A673 (cell line): ENCODE measurements at regions of chr5 and their contacts with region 1.

Region 1: GRCh38 chr5:132490486-132491367 is at the start of gene IRF1:
- DNase-seq: peak; percentile 95
- H3K4me3 ChIP-seq: peak within 1 kb of the TSS; percentile 64
- H3K27ac ChIP-seq: peak within 1 kb of the TSS; percentile 86
- H3K4me1 ChIP-seq: peaks cover 13% of the 10 kb centered on the region
- H3K27me3 ChIP-seq: no peaks in the 10 kb centered on the region
- CTCF ChIP-seq: no peak; the same call in 1 of the 2 replicates
- total RNA-seq, gene IRF1: 5.7 and 6.9 TPM in 2 replicates

Region 2: DNA sequence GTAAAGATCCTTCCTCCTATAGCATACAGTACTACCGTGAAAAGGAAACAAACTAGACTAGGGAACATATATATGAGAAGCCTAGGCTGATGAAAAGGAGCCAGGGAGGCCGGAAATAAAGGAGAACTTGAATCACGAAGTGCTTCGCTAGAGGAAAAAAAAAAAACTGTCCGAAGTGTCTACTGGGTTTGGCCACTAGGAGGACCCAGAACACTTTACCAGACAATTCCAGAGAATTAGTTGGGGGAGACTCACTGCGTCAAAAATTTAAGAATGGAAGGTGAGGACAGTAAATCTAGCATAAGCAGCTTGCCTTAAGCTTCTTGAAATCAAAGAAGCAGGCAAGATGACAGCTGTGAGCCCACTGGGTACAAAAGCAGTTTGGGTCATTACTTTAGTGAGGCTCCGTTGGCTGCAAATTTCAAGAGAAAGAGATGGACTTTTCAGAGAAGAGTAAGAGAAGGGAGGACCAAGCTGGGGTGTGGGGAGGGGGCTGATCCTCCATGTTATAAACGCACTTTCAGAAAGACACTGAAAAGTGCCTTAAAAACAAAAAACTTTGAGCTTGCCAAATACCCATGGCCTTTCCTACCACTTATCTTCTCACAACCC is 310.5 kb before region 1 on chr5:
- CTCF ChIA-PET with region 1: no interaction called
- POLR2A ChIA-PET with region 1: no interaction called
- intact Hi-C with region 1: loop called (anchors 10 kb)
- DNase-seq: peak; percentile 68
- H3K4me3 ChIP-seq: no peak overlapping the region
- H3K27ac ChIP-seq: no peak overlapping the region
- H3K4me1 ChIP-seq: peaks cover 6% of the 10 kb centered on the region
- H3K27me3 ChIP-seq: no peaks in the 10 kb centered on the region
- CTCF ChIP-seq: peak; percentile 81

Region 3: GRCh38 chr5:132419502-132420468 is 70.9 kb before region 1 on chr5:
- CTCF ChIA-PET with region 1: interaction called, 3 read pairs
- POLR2A ChIA-PET with region 1: no interaction called
- intact Hi-C with region 1: loop called (anchors 2 kb)
- DNase-seq: peak; percentile 82
- H3K4me3 ChIP-seq: no peak overlapping the region
- H3K27ac ChIP-seq: no peak overlapping the region
- H3K4me1 ChIP-seq: peaks cover 38% of the 10 kb centered on the region
- H3K27me3 ChIP-seq: no peaks in the 10 kb centered on the region
- CTCF ChIP-seq: peak; percentile 88

Region 4: GRCh38 chr5:132576123-132576522 is 85.4 kb after region 1 on chr5:
- CTCF ChIA-PET with region 1: no interaction called
- POLR2A ChIA-PET with region 1: no interaction called
- intact Hi-C with region 1: no loop called
- DNase-seq: no peak
- H3K4me3 ChIP-seq: no peak overlapping the region
- H3K27ac ChIP-seq: no peak overlapping the region
- H3K4me1 ChIP-seq: no peaks in the 10 kb centered on the region
- H3K27me3 ChIP-seq: no peaks in the 10 kb centered on the region
- CTCF ChIP-seq: no peak